HEK293 (cell line): ENCODE measurements at regions of chr16 and their contacts with region 1.

Region 1: GRCh38 chr16:88770461-88771293 is 14.3 kb downstream of the PIEZO1 start:
- H3K4me3 ChIP-seq: peak overlapping the region; percentile 17
- H3K27ac ChIP-seq: peak overlapping the region; percentile 80
- H3K4me1 ChIP-seq: peaks cover 36% of the 10 kb centered on the region
- CTCF ChIP-seq: peak; percentile 14; the same call in 1 of the 2 replicates

Region 2: DNA sequence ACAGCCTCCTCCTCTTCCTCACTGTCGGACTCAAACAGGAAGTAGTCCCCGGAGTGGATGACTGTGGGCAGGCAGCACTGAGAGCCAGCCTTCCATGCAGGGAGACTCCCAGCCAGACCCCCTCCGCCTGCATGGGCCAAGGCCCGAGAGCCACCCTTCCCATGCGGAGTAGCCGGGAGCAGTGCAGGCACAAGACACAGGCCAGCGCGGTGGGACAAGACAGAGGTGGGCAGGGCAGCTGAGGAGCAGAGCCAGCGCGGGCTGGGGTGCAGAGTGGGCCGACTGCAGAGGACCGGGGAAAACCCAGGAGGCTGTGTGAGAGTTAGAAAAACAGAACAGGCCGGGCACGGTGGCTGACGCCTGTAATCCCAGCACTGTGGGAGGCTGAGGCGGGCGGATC is 46.8 kb before region 1 on chr16:
- CTCF ChIA-PET with region 1: no interaction called
- POLR2A ChIA-PET with region 1: no interaction called
- H3K4me3 ChIP-seq: no peak overlapping the region
- H3K27ac ChIP-seq: no peak overlapping the region
- H3K4me1 ChIP-seq: no peaks in the 10 kb centered on the region
- CTCF ChIP-seq: no peak

Region 3: GRCh38 chr16:88754912-88755744 is 15.5 kb before region 1 on chr16:
- CTCF ChIA-PET with region 1: no interaction called
- POLR2A ChIA-PET with region 1: interaction called, 24 read pairs
- H3K4me3 ChIP-seq: no peak overlapping the region
- H3K27ac ChIP-seq: no peak overlapping the region
- H3K4me1 ChIP-seq: 0 out of 2 replicates have a peak, but pooled peaks cover 3% of the 10 kb centered on the region
- CTCF ChIP-seq: 0 out of 2 replicates have a peak, but pooled peaks have one; percentile 14

Region 4: DNA sequence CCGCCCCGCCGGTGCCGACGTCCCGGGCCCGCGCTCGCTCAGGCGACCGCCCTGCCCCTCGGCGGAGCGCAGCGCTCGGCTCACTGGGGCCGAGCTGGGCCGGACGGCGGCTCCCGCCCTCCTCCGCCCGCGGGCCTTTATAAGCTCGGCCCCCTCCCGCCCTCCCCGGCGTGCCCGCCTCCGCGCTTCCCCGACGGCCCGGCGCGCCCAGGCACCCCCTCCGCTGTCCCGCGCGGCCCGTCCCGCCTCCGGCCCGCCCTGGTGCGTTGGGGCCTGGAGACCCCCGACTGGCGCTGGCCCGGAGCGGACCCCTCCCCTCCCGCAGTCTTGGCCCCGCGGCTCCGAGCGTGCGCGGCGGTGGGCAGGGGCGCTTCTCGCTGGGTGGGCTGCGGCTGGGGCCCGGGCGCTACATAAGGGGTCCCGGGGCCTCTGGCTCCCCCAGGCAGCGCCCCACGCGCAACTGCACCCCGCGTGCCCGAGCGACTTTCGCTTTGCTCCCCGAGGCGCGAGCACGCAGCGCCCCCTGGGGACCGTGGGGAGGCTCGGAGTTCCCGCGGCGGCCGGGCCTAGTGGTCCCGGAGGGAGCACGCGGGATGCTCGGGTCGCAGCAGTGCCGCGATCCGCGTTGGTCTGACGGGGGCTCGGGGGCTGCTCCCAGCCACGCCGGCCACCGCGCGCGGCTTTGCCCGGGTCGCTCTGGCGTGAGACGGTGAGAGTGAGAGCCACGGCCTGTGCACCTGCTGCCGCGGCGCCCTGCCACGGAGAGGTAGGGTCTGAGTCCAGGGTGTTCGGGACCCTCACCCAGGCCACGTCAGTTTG is 14.6 kb after region 1 on chr16 and contains the start of gene PIEZO1:
- CTCF ChIA-PET with region 1: interaction called, 5 read pairs
- POLR2A ChIA-PET with region 1: interaction called, 97 read pairs
- H3K4me3 ChIP-seq: peak within 1 kb of the TSS; percentile 53
- H3K27ac ChIP-seq: peak within 1 kb of the TSS; percentile 76; the same call in 1 of the 2 replicates
- H3K4me1 ChIP-seq: peaks cover 22% of the 10 kb centered on the region
- CTCF ChIP-seq: peak; percentile 94

Region 5: DNA sequence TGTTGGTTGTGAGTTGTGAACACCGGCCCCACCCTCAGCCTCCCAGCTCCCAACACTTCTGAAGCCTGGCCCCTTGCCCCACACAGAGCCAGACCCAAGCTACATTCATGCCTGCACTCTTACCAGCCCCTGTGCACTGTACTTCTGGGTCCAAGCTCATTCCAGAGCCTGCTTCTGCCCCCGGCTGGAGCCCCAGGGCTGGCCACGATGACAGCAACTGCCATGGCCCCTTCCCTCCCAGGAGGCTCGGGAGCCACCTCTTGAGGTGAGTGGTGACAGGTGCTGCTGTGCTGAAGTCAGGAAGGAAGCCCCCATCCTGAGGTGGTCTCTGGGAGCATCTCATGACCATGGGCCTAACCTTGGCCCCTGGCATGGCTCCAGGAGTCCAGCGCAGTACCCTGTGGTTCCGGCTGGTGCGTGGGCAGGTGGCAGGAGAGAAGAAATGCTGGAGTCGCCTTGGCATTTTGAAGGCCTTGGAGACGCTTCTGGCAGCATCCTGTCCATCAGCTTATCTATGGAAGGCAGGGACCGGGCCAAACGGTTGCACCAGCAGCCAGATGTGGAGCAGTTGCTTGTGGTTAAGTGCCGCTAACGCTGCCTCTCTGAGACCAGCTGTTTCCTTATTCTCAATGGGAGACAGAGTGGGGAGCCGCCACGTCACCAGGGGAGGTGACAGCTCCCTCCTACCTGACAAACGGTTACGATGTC is 29.0 kb after region 1 on chr16:
- CTCF ChIA-PET with region 1: no interaction called
- POLR2A ChIA-PET with region 1: interaction called, 15 read pairs
- H3K4me3 ChIP-seq: no peak overlapping the region
- H3K27ac ChIP-seq: no peak overlapping the region
- H3K4me1 ChIP-seq: no peaks in the 10 kb centered on the region
- CTCF ChIP-seq: no peak

Region 6: GRCh38 chr16:88821168-88821850 is 50.6 kb after region 1 on chr16:
- CTCF ChIA-PET with region 1: no interaction called
- POLR2A ChIA-PET with region 1: no interaction called
- H3K4me3 ChIP-seq: no peak overlapping the region
- H3K27ac ChIP-seq: no peak overlapping the region
- H3K4me1 ChIP-seq: no peaks in the 10 kb centered on the region
- CTCF ChIP-seq: no peak